Right lobe of liver (tissue), 6 donors: ENCODE measurements at regions of chr2 and their contacts with region 1.

Region 1: DNA sequence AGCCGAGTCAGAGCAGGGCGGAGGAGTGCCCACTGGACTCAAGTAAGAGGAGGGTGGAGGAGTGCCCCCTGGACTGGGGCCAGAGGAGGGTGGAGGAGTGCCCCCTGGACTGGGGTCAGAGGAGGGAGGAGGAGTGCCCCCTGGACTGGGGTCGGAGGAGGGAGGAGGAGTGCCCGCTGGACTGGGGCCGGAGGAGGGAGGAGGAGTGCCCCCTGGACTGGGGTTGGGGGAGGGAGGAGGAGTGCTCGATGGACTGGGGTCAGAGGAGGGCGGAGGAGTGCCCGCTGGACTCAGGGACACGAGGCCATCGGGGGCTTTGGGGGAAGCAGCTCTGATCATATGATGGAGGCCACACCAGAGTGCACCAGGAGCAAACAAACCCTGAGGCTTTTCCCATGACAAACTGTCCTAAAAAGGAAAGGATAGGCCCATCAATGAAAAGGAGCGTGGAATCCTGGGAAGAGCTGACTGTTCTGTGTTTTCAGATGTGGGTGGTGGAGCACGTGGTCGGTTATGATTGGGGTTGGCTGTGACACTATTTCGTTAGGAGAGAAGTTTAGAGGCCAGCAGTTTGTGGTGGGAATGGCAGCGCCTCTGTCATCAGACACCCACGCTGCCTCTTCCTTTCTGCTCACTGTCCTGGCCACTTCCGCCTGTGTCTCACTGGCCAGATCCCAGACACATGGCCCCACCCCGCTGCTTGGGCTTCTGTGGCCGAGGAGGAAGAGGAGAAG is 24.5 kb upstream of the HPCAL1 start:
- DNase-seq: peak; percentile 69 to 75 (median 70)
- ATAC-seq: peak; percentile 60 to 79 (median 72)
- H3K4me3 ChIP-seq: no peak overlapping the region
- H3K27ac ChIP-seq: peak overlapping the region in 1 of 3 donors; percentile 64
- H3K4me1 ChIP-seq: no peaks in the 10 kb centered on the region
- H3K27me3 ChIP-seq: no peaks in the 10 kb centered on the region
- CTCF ChIP-seq: no peak
- POLR2A ChIP-seq: no peak

Region 2: GRCh38 chr2:10122386-10123280 is 155.6 kb before region 1 on chr2 and contains the start of gene RRM2:
- intact Hi-C with region 1: loop called in 1 of 2 experiments (anchors 10 kb)
- DNase-seq: peak; percentile 94 to 97 (median 94)
- ATAC-seq: peak; percentile 67 to 83 (median 74)
- H3K4me3 ChIP-seq: peak within 1 kb of the TSS; percentile 38 to 50 (median 40)
- H3K27ac ChIP-seq: no peak within 1 kb of the TSS
- H3K4me1 ChIP-seq: peaks cover 4 to 45% (median 21%) of the 10 kb centered on the region in 4 donors
- H3K27me3 ChIP-seq: no peaks in the 10 kb centered on the region
- CTCF ChIP-seq: no peak
- POLR2A ChIP-seq: no peak
- total RNA-seq, gene RRM2: 1.1 to 10.3 (median 5.7) TPM